Calu3 (cell line): ENCODE measurements at regions of chr15 and their contacts with region 1.

Region 1: DNA sequence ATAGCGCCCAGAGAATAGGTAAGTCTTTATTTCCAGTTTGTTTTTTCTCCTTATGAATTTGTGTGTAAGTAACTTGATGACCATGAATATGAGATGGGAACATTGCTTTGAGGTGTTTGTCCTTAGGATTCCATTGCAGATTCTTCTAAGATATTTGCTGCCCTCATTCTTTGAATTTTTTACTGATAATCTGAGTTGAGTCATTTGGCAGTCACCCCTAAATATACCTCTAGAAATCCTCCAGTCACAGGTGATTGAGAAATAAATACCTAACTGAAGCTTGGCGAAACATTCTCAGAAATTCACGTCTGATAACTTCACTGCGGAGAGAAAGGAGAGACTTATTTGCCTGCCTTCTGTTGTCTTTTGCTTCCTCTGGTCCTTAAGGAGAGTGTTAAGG is 345.5 kb downstream of the SQOR start:
- DNase-seq: no peak
- H3K4me3 Mint-ChIP-seq: no peak overlapping the region
- H3K27ac Mint-ChIP-seq: no peak overlapping the region
- H3K4me1 Mint-ChIP-seq: no peaks in the 10 kb centered on the region
- H3K27me3 Mint-ChIP-seq: no peaks in the 10 kb centered on the region
- CTCF ChIP-seq: no peak

Region 2: DNA sequence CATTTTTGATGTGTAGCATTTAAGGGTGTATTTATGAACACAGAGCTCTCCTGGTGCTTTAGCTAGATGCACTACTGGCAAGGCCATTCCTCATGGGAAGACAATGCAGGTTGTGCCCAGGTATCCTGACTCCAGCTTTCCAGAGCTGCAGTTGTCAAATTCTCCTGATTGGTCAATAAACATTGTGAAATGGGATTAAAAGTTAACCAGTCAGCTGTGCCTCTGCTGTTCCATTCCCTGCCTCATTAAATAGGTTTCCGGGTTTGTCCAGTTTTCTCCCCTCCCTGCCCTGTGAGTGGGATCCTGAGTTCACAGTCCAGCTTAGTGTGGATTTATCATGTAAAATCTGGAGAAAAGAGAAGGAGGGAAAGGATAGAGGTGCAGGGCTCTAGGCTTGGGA is 138.2 kb before region 1 on chr15:
- CTCF ChIA-PET with region 1: no interaction called
- intact Hi-C with region 1: loop called (anchors 10 kb)
- DNase-seq: peak; percentile 5
- H3K4me3 Mint-ChIP-seq: no peak overlapping the region
- H3K27ac Mint-ChIP-seq: no peak overlapping the region
- H3K4me1 Mint-ChIP-seq: peaks cover 13% of the 10 kb centered on the region
- H3K27me3 Mint-ChIP-seq: no peaks in the 10 kb centered on the region
- CTCF ChIP-seq: no peak

Region 3: DNA sequence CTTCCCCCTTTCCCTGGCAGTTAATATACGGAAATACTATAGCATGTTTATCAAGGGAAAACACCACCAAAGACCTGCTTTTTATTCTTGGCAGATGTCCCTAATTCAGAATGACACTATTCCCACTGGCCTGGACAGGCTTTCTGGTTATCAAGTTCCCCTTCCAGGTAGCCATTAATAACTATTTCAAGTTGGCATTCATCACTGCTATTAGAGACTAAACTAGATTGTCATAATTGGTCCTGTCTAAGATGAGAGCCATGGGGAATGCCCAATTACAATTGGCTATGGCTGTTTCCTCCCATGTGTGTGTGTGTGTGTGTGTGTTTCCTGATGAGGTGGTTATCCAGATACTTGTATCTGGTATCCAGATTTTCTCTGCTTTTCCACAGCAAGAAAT is 262.6 kb after region 1 on chr15:
- CTCF ChIA-PET with region 1: no interaction called
- intact Hi-C with region 1: no loop called
- DNase-seq: no peak
- H3K4me3 Mint-ChIP-seq: no peak overlapping the region
- H3K27ac Mint-ChIP-seq: no peak overlapping the region
- H3K4me1 Mint-ChIP-seq: no peaks in the 10 kb centered on the region
- H3K27me3 Mint-ChIP-seq: no peaks in the 10 kb centered on the region
- CTCF ChIP-seq: no peak